ENCODE measurements at regions of chr22 and their contacts with region 1.

Region 1: DNA sequence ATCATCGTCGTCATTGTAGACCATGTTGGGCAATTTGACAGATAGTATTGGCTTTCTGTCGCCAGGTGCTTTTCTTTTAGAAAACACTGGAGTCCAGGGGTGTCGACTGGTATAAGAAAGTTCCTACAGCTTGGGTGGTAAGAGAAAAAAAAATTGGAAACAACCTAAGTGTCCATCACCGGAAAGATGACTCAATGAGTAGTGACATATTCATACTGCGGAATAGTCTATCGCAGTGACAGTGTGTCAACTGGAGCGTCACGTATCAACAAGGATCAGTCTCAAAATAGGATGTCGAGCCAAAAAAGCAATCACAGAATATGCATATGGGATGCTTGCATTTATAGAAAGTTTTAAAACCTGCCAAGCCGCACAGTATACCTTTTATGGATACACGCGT is 157.6 kb downstream of the MN1 start:
- DNase-seq: no peak
- H3K4me3 ChIP-seq: no peak overlapping the region
- H3K27ac ChIP-seq: no peak overlapping the region
- H3K4me1 ChIP-seq: no peaks in the 10 kb centered on the region
- H3K27me3 ChIP-seq: no peaks in the 10 kb centered on the region
- CTCF ChIP-seq: no peak

Region 2: GRCh38 chr22:27391092-27391770 is 252.7 kb before region 1 on chr22:
- CTCF ChIA-PET with region 1: interaction called, 12 read pairs
- POLR2A ChIA-PET with region 1: no interaction called
- intact Hi-C with region 1: no loop called
- DNase-seq: no peak
- H3K4me3 ChIP-seq: no peak overlapping the region
- H3K27ac ChIP-seq: no peak overlapping the region
- H3K4me1 ChIP-seq: peaks cover 7% of the 10 kb centered on the region
- H3K27me3 ChIP-seq: no peaks in the 10 kb centered on the region
- CTCF ChIP-seq: no peak

Region 3: GRCh38 chr22:28480000-28480715 is 836.3 kb after region 1 on chr22:
- CTCF ChIA-PET with region 1: no interaction called
- POLR2A ChIA-PET with region 1: no interaction called
- intact Hi-C with region 1: no loop called
- DNase-seq: peak; percentile 41
- H3K4me3 ChIP-seq: no peak overlapping the region
- H3K27ac ChIP-seq: peak overlapping the region; percentile 43
- H3K4me1 ChIP-seq: peaks cover 37% of the 10 kb centered on the region
- H3K27me3 ChIP-seq: no peaks in the 10 kb centered on the region
- CTCF ChIP-seq: no peak